Thyroid gland (tissue), 4 donors: ENCODE measurements at regions of chr11 and their contacts with region 1.

Region 1: GRCh38 chr11:19553683-19554333 is 158.8 kb upstream of the NAV2 start:
- DNase-seq: peak; percentile 84 to 89
- H3K4me3 ChIP-seq: no peak overlapping the region
- H3K27ac ChIP-seq: no peak overlapping the region
- H3K4me1 ChIP-seq: peaks cover 30 to 34% of the 10 kb centered on the region in 2 donors
- H3K27me3 ChIP-seq: no peaks in the 10 kb centered on the region
- CTCF ChIP-seq: peak; percentile 82 to 94 (median 90)
- POLR2A ChIP-seq: no peak

Region 2: GRCh38 chr11:19121646-19122045 is 432.2 kb before region 1 on chr11:
- intact Hi-C with region 1: no loop called
- DNase-seq: no peak
- H3K4me3 ChIP-seq: no peak overlapping the region
- H3K27ac ChIP-seq: no peak overlapping the region
- H3K4me1 ChIP-seq: peaks cover 0 to 3% of the 10 kb centered on the region in 2 donors
- H3K27me3 ChIP-seq: no peaks in the 10 kb centered on the region
- CTCF ChIP-seq: no peak
- POLR2A ChIP-seq: no peak

Region 3: DNA sequence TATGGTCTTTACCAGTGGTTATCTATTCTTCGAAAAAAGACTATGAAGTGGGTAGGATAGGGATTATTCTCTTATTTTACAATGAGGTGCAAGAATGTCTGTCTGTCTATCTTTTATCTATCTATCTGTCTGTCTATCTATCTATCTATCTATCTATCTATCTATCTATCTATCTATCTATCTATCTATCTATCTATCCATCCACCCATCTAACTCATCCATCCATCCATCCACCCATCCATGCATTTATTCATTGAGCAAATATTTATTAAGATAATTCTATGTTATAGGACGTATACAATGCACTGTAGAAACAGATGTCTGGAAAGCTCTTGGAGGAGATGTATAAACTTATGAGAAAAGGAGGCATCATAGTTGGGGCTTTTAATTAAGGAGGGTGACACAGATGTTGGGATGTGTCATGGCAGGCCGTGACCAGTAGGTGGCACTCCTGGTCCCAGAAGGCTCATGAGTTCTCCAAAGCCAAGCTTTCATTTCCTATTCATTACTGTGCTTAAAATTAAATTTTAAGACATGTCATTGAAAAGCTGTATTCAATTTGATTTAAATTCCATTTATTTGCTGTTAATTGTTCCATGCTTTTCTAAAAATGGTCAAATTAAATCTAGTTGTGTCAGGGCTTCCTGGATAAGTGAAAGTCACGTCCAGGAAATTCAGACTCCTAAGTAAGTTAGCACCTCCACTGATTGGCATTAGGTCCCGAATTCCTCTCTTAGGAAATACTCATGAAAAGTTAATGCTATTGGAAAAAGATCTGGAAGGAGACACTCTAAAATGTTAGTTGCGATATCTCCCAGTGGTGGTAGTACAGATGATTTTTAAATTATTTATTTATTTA is 294.1 kb before region 1 on chr11:
- intact Hi-C with region 1: loop called (anchors 5 kb)
- DNase-seq: peak; percentile 73 to 78
- H3K4me3 ChIP-seq: no peak overlapping the region
- H3K27ac ChIP-seq: peak overlapping the region in 1 of 3 donors; percentile 19
- H3K4me1 ChIP-seq: peaks cover 4 to 24% of the 10 kb centered on the region in 2 donors
- H3K27me3 ChIP-seq: no peaks in the 10 kb centered on the region
- CTCF ChIP-seq: peak; percentile 72 to 97 (median 88)
- POLR2A ChIP-seq: no peak

Region 4: GRCh38 chr11:19323502-19323901 is 230.3 kb before region 1 on chr11:
- intact Hi-C with region 1: loop called (anchors 5 kb)
- DNase-seq: no peak
- H3K4me3 ChIP-seq: no peak overlapping the region
- H3K27ac ChIP-seq: no peak overlapping the region
- H3K4me1 ChIP-seq: peaks cover 6 to 14% of the 10 kb centered on the region in 2 donors
- H3K27me3 ChIP-seq: no peaks in the 10 kb centered on the region
- CTCF ChIP-seq: peak in 4 of 6 experiments; percentile 22 to 37 (median 26)
- POLR2A ChIP-seq: no peak

Region 5: DNA sequence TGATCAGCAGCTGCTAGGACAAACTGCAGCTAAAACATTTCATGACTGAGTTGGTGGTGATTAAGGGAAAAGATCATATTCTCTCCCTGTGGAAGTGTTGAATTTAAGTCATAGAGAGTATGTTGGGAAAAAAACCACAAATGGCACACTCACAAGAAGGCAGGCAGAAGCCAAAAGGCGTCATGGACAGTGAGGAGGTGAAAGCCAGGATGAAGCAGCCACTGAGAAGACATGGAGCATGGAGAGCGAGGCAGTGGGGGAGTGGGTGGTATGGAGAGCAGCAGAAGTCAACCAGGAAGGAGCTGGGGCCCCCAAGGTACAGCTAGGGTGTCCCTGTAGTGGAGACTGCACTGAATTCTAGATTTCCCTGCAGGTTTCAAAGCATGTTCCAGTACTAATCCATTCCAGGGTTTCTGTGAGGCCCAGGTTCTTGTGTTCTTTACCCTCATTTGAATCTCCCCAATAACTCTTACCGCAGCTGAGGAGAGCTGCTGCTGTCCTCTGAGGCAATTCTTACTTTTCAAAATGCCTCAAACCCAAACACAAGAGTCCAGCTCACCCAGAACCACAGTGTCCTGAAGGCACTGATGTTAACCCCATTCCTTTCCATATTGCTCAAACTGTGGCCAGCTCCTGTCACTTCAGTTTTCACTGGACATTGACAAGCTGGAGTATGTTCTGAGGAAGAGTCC is 121.3 kb before region 1 on chr11:
- intact Hi-C with region 1: no loop called
- DNase-seq: peak; percentile 45 to 55
- H3K4me3 ChIP-seq: no peak overlapping the region
- H3K27ac ChIP-seq: peak overlapping the region; percentile 52 to 76 (median 69)
- H3K4me1 ChIP-seq: peaks cover 45 to 55% of the 10 kb centered on the region in 2 donors
- H3K27me3 ChIP-seq: no peaks in the 10 kb centered on the region
- CTCF ChIP-seq: no peak
- POLR2A ChIP-seq: peak in 1 of 2 donors; percentile 48